Activated CD4-positive, alpha-beta T cell treated with anti-CD3 and anti-CD28 coated beads, Interleukin-2, amount 10 ng/mL, durations not matched to agents 7 days and 5 days (primary cell): ENCODE measurements at regions of chr19 and their contacts with region 1.

Region 1: GRCh38 chr19:14479975-14480699 is 5.0 kb upstream of the PTGER1 start:
- DNase-seq: peak; percentile 72
- H3K4me3 Mint-ChIP-seq: no peak overlapping the region
- H3K27ac Mint-ChIP-seq: no peak overlapping the region
- H3K4me1 Mint-ChIP-seq: peaks cover 16% of the 10 kb centered on the region
- H3K27me3 Mint-ChIP-seq: no peaks in the 10 kb centered on the region

Region 2: GRCh38 chr19:14419106-14419813 is 60.9 kb before region 1 on chr19 and contains the start of gene DDX39A:
- CTCF ChIA-PET with region 1: no interaction called
- POLR2A ChIA-PET with region 1: no interaction called
- DNase-seq: peak; percentile 99
- H3K4me3 Mint-ChIP-seq: peak within 1 kb of the TSS; percentile 99
- H3K27ac Mint-ChIP-seq: peak within 1 kb of the TSS; percentile 99
- H3K4me1 Mint-ChIP-seq: peaks cover 37% of the 10 kb centered on the region
- H3K27me3 Mint-ChIP-seq: no peaks in the 10 kb centered on the region
- total RNA-seq, gene DDX39A: 232 to 269 TPM

Region 3: DNA sequence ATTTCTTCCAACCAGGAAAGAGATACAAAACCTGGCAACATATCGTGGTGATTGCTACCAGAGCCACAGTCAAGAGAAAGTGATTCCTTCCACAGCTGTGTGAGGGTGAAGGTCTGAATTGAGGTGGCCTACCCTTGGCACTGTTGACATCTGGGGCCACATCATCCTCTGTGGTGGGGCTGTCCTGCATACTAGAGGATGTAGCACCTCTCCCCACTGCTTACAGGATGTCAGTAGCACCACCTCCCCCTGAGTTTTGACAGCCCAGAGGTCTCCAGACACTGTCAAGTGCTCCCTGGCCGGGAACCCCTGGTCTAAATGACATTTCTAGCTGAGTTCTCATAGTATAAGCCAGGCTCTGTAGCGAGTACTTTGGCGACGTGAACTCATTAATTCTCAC is 20.4 kb before region 1 on chr19:
- CTCF ChIA-PET with region 1: interaction called, 10 read pairs
- POLR2A ChIA-PET with region 1: no interaction called
- DNase-seq: no peak
- H3K4me3 Mint-ChIP-seq: no peak overlapping the region
- H3K27ac Mint-ChIP-seq: no peak overlapping the region
- H3K4me1 Mint-ChIP-seq: peaks cover 7% of the 10 kb centered on the region
- H3K27me3 Mint-ChIP-seq: no peaks in the 10 kb centered on the region

Region 4: DNA sequence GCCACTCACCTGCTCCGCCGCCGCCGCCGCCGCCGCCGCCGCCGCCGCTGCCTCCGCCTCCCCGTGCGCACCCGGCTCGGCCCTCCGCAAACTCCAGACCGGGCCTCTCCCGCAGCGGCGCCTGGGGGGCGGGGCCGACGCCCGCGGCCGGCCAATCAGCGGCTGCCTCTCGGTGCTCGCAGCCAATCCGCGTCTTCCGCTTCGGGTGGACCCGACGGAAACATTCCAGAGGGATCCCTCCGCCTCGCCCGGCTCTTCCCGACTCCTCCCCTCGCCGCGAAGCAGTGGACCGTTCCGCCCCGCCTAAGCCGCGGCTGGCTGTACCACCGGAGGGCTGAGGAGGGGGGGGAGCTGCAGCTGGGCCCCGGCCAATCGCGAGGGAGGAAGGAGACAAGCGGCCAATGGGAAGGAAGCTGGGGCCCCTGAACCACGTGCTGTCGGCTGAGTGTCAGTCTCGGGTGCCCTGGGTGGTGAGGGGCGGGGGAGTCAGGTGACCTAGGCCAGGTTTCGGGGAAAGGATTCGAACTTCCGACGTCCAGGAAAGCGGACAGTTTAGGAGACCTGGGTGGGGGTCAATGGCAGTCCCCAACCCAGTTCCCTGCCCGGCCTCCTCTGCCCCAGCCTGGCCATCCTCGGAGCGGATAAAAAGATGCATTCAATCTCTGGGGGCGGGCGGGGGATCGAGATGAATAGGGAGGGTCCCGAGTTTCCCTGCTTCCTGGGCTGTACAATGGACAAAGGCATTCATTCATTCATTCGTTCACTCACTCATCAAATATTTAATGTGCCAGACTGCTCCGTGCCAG is 16.1 kb after region 1 on chr19 and contains the start of gene GIPC1:
- CTCF ChIA-PET with region 1: interaction called, 45 read pairs
- POLR2A ChIA-PET with region 1: no interaction called
- DNase-seq: peak; percentile 82
- H3K4me3 Mint-ChIP-seq: peak within 1 kb of the TSS; percentile 83
- H3K27ac Mint-ChIP-seq: peak within 1 kb of the TSS; percentile 85
- H3K4me1 Mint-ChIP-seq: peaks cover 27% of the 10 kb centered on the region
- H3K27me3 Mint-ChIP-seq: no peaks in the 10 kb centered on the region
- total RNA-seq, gene GIPC1: 36.5 to 47.2 TPM

Region 5: GRCh38 chr19:14599548-14600147 is 119.5 kb after region 1 on chr19:
- CTCF ChIA-PET with region 1: no interaction called
- POLR2A ChIA-PET with region 1: no interaction called
- DNase-seq: no peak
- H3K4me3 Mint-ChIP-seq: no peak overlapping the region
- H3K27ac Mint-ChIP-seq: no peak overlapping the region
- H3K4me1 Mint-ChIP-seq: peaks cover 4% of the 10 kb centered on the region
- H3K27me3 Mint-ChIP-seq: no peaks in the 10 kb centered on the region